Sigmoid colon (tissue), 7 donors: ENCODE measurements at regions of chr18 and their contacts with region 1.

Region 1: DNA sequence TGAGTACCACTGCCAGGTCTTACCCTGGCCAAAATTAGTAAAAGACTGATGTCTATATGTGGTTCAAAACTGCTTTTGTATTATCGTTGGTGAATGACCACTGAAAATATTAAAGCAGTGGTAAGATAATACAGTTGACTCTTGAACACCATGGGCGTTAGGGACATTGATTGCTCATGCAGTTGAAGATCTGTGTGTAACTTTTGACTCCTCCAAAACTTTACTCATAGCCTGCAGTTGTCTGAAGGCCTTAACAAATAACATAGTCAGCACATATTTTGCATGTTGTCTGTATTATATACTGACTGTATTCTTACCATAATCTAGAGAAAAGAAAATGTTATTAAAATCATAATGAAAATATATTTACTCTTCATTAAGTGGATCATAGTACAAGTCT is 5.8 kb upstream of the ANKRD12 start:
- DNase-seq: no peak
- H3K4me3 ChIP-seq: no peak overlapping the region
- H3K27ac ChIP-seq: peak overlapping the region in 1 of 4 donors; percentile 8
- H3K4me1 ChIP-seq: peaks cover 0 to 20% (median 14%) of the 10 kb centered on the region in 4 donors
- H3K27me3 ChIP-seq: no peaks in the 10 kb centered on the region
- CTCF ChIP-seq: no peak
- EP300 ChIP-seq: no peak
- POLR2A ChIP-seq: no peak

Region 2: GRCh38 chr18:9177031-9177430 is 46.2 kb after region 1 on chr18:
- intact Hi-C with region 1: loop called (anchors 2 kb)
- DNase-seq: no peak
- H3K4me3 ChIP-seq: no peak overlapping the region
- H3K27ac ChIP-seq: no peak overlapping the region
- H3K4me1 ChIP-seq: peaks cover 0 to 61% (median 47%) of the 10 kb centered on the region in 4 donors
- H3K27me3 ChIP-seq: no peaks in the 10 kb centered on the region
- CTCF ChIP-seq: no peak
- EP300 ChIP-seq: no peak
- POLR2A ChIP-seq: no peak